Activated naive CD4-positive, alpha-beta T cell treated with anti-CD3 and anti-CD28 coated beads, Interleukin-2, amount 10 ng/mL, durations not matched to agents 7 days and 5 days (primary cell): ENCODE measurements at regions of chr12 and their contacts with region 1.

Region 1: GRCh38 chr12:120228291-120229070 is 27.6 kb upstream of the RPLP0 start:
- DNase-seq: peak; percentile 94
- H3K4me3 Mint-ChIP-seq: peak overlapping the region; percentile 48
- H3K27ac Mint-ChIP-seq: peak overlapping the region; percentile 80
- H3K4me1 Mint-ChIP-seq: peaks cover 86% of the 10 kb centered on the region
- H3K27me3 Mint-ChIP-seq: no peaks in the 10 kb centered on the region

Region 2: DNA sequence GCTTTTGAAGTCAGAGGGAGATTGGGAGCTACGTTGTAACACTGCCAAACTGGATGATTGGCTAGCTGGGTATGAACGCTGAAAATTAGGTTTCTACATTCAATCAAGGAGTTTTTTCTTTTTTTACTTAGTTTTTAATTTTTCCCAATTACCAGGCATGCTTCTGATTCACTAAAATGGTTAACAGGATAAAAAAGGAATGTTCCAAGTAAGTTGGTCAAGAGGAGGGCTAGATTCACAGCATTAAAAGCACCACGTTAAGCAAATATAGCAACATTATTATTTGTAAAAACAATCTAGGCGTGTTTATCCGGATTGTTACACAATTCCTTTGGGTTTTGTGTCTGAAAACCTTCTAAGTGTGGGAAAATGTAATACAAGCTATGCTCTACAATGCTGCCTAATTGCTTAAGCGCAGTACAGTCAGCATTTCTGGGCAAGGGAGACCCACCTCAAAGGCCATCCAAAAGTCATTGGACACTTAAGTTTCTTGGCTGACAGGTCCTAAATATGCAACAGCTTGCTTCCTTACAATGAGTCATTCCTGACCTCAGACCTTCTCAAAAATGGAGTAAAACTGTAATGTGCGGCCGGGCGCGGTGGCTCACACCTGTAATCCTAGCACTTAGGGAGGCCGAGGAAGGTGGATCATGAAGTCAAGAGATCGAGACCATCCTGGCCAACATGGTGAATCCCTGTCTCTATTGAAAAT is 28.7 kb before region 1 on chr12:
- CTCF ChIA-PET with region 1: interaction called, 39 read pairs
- DNase-seq: no peak
- H3K4me3 Mint-ChIP-seq: peak overlapping the region; percentile 93
- H3K27ac Mint-ChIP-seq: peak overlapping the region; percentile 99
- H3K4me1 Mint-ChIP-seq: peaks cover 55% of the 10 kb centered on the region
- H3K27me3 Mint-ChIP-seq: no peaks in the 10 kb centered on the region

Region 3: GRCh38 chr12:120216742-120217605 is 11.5 kb before region 1 on chr12:
- CTCF ChIA-PET with region 1: interaction called, 12 read pairs
- DNase-seq: no peak
- H3K4me3 Mint-ChIP-seq: no peak overlapping the region
- H3K27ac Mint-ChIP-seq: no peak overlapping the region
- H3K4me1 Mint-ChIP-seq: no peaks in the 10 kb centered on the region
- H3K27me3 Mint-ChIP-seq: no peaks in the 10 kb centered on the region

Region 4: GRCh38 chr12:120265473-120266179 is 37.1 kb after region 1 on chr12 and contains the start of gene PXN:
- CTCF ChIA-PET with region 1: interaction called, 773 read pairs
- DNase-seq: peak; percentile 90
- H3K4me3 Mint-ChIP-seq: peak within 1 kb of the TSS; percentile 99
- H3K27ac Mint-ChIP-seq: peak within 1 kb of the TSS; percentile 86
- H3K4me1 Mint-ChIP-seq: peaks cover 41% of the 10 kb centered on the region
- H3K27me3 Mint-ChIP-seq: peaks cover 5% of the 10 kb centered on the region

Region 5: GRCh38 chr12:120292661-120293531 is 64.4 kb after region 1 on chr12 and contains the start of gene RNU4-1:
- CTCF ChIA-PET with region 1: interaction called, 31 read pairs
- DNase-seq: peak; percentile 81
- H3K4me3 Mint-ChIP-seq: no peak within 1 kb of the TSS
- H3K27ac Mint-ChIP-seq: no peak within 1 kb of the TSS
- H3K4me1 Mint-ChIP-seq: peaks cover 13% of the 10 kb centered on the region
- H3K27me3 Mint-ChIP-seq: peaks cover 30% of the 10 kb centered on the region

Region 6: DNA sequence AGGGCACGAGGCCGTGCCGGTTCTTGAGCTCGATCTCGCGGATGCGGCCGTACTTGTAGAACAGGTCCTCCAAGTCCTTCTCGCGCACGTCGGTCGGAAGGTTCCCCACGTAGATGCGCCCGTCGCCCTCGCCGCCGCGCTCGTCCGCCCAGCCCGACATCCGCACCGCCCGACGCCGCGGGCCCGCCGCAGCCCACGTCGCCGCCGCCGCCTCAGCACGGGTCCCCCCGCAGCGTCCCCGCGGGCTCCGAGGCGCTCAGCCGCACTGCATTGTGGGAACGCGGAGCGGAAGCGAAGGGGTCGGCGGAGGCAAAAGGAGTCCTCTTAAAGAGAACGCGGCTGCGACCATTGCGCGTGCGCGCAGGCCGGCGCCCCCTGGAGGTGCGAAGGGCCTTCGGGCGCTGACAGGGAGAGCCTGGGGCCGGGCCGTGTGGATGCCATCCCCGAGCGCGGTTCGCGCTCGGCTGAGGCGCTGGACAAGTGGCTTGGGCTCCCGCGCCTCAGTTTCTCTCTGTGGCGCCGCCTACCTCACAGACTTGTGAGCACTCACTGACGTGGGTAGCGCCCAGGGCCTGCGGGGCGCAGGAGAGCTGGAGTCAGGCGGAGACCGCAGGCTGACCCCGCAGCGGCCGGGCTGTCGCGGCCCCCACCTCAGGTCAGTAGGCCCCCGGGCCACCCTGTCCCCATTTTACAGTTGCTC is 241.1 kb after region 1 on chr12 and contains the start of gene SRSF9:
- CTCF ChIA-PET with region 1: no interaction called
- DNase-seq: peak; percentile 97
- H3K4me3 Mint-ChIP-seq: peak within 1 kb of the TSS; percentile 93
- H3K27ac Mint-ChIP-seq: peak within 1 kb of the TSS; percentile 90
- H3K4me1 Mint-ChIP-seq: peaks cover 39% of the 10 kb centered on the region
- H3K27me3 Mint-ChIP-seq: peaks cover 7% of the 10 kb centered on the region